ENCODE measurements at regions of chr5 and their contacts with region 1.

Region 1: DNA sequence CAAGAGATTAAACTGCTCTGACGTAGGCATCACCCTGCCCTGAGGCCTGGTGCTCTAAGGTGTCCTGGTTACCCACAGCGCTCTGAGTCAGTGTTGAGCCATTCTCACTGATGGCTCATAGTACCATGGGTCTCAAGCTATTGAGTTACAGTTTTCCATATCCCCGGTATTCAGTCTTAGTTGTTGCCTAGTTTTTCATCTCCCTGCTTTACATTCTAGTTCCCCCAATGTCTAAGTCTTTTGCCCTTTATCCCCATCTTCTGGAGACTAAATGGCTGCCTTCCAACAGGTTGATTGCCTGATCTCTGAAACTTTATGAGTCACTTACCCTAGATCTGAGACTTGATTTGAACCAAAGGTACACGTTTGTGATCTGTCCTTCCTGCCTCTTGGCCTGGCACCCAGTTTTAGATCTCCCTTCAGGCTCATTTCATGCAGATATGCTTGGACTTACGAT is 161.2 kb upstream of the PTGER4 start:
- DNase-seq: no peak
- ATAC-seq: no peak
- H3K4me3 ChIP-seq: no peak overlapping the region
- H3K4me3 Mint-ChIP-seq: no peak overlapping the region
- H3K27ac ChIP-seq: no peak overlapping the region
- H3K27ac Mint-ChIP-seq: peak overlapping the region in 1 of 2 donors; percentile 33
- H3K4me1 ChIP-seq: peaks cover 15 to 22% of the 10 kb centered on the region in 2 experiments
- H3K4me1 Mint-ChIP-seq: peaks cover 34 to 38% (median 36%) of the 10 kb centered on the region in 3 donors
- H3K27me3 ChIP-seq: no peaks in the 10 kb centered on the region
- H3K27me3 Mint-ChIP-seq: no peaks in the 10 kb centered on the region

Region 2: DNA sequence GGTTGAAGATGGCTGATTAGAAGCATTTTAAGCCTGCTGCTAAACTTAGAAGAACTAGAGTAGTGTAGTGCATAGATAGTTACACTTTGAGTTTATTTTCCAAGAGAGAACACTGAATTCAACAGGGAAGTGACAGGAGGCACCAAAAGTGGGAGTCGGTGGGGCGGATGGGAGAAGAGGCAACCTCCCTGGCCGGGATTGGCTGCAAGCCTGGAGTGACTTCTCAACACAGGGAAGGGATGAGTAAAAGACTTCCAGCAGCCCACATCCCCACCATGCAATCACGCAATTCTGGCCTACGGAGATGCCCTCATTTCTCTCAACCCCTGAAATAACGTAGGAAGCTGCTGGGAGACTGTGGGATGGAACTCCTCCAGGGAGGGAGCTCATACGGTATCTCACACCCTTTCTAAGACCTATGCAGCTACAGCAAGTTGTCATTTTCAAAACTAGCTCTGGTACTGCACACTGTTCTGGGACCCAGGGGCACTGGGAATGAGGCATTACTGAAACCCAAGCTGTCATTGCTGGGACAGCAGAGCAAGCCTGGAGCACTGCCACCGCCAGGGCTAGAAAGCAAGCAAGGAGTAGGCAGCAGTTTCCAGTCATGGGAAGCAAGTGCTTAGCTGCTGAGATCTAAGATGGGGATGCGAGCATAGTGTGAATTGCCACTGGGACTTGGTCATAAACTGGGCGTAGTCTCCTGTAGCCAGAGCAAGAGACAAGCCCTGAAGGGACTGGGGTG is 170.4 kb before region 1 on chr5:
- CTCF ChIA-PET with region 1: interaction called in 1 of 2 experiments, 10 read pairs
- POLR2A ChIA-PET with region 1: no interaction called
- DNase-seq: no peak
- ATAC-seq: no peak
- H3K4me3 ChIP-seq: no peak overlapping the region
- H3K4me3 Mint-ChIP-seq: no peak overlapping the region
- H3K27ac ChIP-seq: no peak overlapping the region
- H3K27ac Mint-ChIP-seq: no peak overlapping the region
- H3K4me1 ChIP-seq: no peaks in the 10 kb centered on the region
- H3K4me1 Mint-ChIP-seq: no peaks in the 10 kb centered on the region
- H3K27me3 ChIP-seq: no peaks in the 10 kb centered on the region
- H3K27me3 Mint-ChIP-seq: no peaks in the 10 kb centered on the region

Region 3: DNA sequence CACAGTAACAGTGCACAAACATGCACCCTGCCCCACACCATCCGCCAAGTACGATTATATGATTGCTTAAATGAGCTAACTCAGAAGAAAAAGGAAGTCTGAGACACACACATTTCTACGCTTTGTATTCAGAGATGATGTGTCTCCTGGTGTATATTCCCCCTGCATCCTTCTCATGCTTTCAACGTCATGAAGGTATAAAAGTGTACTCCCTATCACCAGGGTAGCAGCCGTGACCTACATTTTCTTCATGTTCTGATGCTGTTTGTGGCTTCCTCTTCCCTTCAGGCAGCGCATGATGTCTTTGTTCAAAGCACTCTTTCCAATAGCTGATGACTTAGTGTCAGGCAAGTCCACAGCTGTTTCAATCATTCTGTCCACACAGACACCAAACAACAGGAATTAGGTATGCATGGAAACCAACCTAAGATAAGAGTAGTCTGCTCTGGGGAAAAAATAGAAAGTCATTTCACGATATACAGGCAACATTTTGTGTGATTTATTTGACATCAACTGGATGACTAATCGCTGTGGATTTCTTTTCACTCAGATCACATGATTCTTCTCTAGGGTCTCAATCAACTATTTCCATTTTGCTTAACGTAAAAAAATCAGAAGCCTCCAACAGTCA is 108.2 kb before region 1 on chr5:
- CTCF ChIA-PET with region 1: no interaction called
- POLR2A ChIA-PET with region 1: no interaction called
- DNase-seq: peak; percentile 35 to 95 (median 78)
- ATAC-seq: peak; percentile 86 to 91 (median 89)
- H3K4me3 ChIP-seq: peak overlapping the region; percentile 31 to 47
- H3K4me3 Mint-ChIP-seq: peak overlapping the region; percentile 66 to 80 (median 76)
- H3K27ac ChIP-seq: peak overlapping the region; percentile 97
- H3K27ac Mint-ChIP-seq: peak overlapping the region; percentile 98 to 100
- H3K4me1 ChIP-seq: peaks cover 49 to 53% of the 10 kb centered on the region in 2 experiments
- H3K4me1 Mint-ChIP-seq: peaks cover 64 to 67% (median 65%) of the 10 kb centered on the region in 3 donors
- H3K27me3 ChIP-seq: no peaks in the 10 kb centered on the region
- H3K27me3 Mint-ChIP-seq: no peaks in the 10 kb centered on the region